B cell (primary cell): ENCODE measurements at regions of chr1 and their contacts with region 1.

Region 1: DNA sequence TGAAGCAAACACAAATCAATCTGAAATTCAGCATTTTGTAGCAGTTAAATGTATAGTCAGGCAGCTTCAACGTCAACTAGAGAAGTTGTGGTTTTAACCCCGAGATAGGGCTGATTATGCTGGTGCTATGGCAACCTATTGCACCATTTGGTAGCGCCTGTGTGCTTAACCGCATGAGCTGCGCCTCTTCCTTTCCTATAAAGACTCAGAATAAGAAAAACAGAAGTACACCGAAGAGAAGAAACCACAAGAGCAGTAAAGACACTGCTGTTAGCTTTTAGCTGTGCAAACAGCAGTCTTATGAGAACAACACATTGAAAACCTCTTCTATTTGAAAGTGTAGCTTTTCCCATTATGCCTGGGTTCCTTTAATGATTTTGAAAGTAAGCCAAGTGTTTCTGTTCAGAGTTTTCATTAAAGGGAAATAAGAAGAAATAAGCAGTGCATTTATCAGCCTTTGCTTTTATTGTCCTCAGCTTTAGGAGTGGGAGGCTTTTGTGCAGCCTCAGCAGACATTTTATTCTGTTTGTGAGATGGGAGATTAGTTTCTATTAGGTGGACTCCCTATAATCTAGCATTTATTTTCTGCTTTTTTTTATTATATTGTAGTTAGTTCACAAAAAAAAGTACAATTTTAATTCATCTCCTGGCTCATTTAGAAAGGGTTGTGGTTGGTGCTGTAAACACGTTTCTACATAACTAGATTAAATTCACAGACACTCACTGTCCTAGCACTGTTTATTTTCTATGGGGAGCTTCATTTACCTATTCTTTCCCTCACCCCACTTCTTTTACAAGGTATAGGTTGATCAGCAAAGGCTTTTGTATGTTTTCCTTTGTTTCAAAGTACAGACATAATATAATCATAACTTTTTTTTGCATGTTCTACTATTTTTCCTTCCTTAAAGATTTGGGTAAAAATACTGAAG is 43.3 kb downstream of the PTPRC start:
- DNase-seq: peak; percentile 94
- ATAC-seq: peak; percentile 83
- H3K4me3 ChIP-seq: peak overlapping the region; percentile 9 to 66 (median 35)
- H3K4me3 Mint-ChIP-seq: peak overlapping the region; percentile 57
- H3K27ac ChIP-seq: peak overlapping the region; percentile 73 to 98
- H3K27ac Mint-ChIP-seq: peak overlapping the region; percentile 82
- H3K4me1 ChIP-seq: peaks cover 76 to 92% of the 10 kb centered on the region in 2 donors
- H3K4me1 Mint-ChIP-seq: peaks cover 86% of the 10 kb centered on the region
- H3K27me3 ChIP-seq: no peaks in the 10 kb centered on the region
- H3K27me3 Mint-ChIP-seq: no peaks in the 10 kb centered on the region
- CTCF ChIP-seq: no peak

Region 2: DNA sequence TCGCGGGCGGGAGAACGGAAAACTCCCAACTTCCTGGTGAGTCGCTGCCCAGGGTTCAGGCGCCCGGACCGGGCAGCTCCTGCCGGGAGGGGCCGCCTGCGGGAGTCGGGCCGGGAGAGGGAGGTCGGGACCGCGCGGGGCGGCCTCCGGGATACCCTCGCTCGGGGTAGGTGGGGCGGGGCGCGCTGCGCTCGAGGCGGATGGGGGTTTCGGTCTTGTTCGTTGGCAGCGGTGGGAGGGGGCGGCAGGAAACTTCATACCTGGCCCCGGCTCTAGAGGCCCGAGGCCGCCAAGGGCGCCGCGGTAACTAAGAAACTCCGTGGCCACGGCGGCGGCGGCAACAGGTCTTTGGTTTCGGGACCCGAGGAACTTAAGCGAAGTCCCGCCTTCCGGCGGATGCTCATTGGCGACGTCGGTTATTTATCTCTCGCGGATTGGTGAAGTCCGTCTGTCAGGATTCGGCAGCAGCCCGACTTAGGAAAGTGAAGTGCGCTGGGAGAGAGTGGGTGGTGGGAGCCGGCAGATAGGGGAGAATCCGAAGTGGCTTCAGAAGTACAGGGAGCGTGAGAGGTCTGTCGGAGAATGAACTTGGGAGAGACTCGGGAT is 524.8 kb before region 1 on chr1:
- CTCF ChIA-PET with region 1: interaction called, 5 read pairs
- POLR2A ChIA-PET with region 1: no interaction called
- intact Hi-C with region 1: loop called (anchors 2 kb)
- DNase-seq: peak; percentile 90
- ATAC-seq: peak; percentile 51
- H3K4me3 ChIP-seq: peak overlapping the region; percentile 64 to 97 (median 87)
- H3K4me3 Mint-ChIP-seq: peak overlapping the region; percentile 99
- H3K27ac ChIP-seq: peak overlapping the region; percentile 88 to 95
- H3K27ac Mint-ChIP-seq: peak overlapping the region; percentile 97
- H3K4me1 ChIP-seq: peaks cover 24 to 36% of the 10 kb centered on the region in 2 donors
- H3K4me1 Mint-ChIP-seq: peaks cover 41% of the 10 kb centered on the region
- H3K27me3 ChIP-seq: no peaks in the 10 kb centered on the region
- H3K27me3 Mint-ChIP-seq: no peaks in the 10 kb centered on the region
- CTCF ChIP-seq: no peak

Region 3: GRCh38 chr1:198416296-198416695 is 265.8 kb before region 1 on chr1:
- CTCF ChIA-PET with region 1: no interaction called
- POLR2A ChIA-PET with region 1: no interaction called
- intact Hi-C with region 1: no loop called
- DNase-seq: no peak
- ATAC-seq: no peak
- H3K4me3 ChIP-seq: no peak overlapping the region
- H3K4me3 Mint-ChIP-seq: no peak overlapping the region
- H3K27ac ChIP-seq: no peak overlapping the region
- H3K27ac Mint-ChIP-seq: no peak overlapping the region
- H3K4me1 ChIP-seq: no peaks in the 10 kb centered on the region
- H3K4me1 Mint-ChIP-seq: no peaks in the 10 kb centered on the region
- H3K27me3 ChIP-seq: peaks cover 0 to 5% (median 1%) of the 10 kb centered on the region in 4 experiments
- H3K27me3 Mint-ChIP-seq: peaks cover 17% of the 10 kb centered on the region
- CTCF ChIP-seq: no peak

Region 4: GRCh38 chr1:198520524-198521254 is 161.4 kb before region 1 on chr1:
- CTCF ChIA-PET with region 1: interaction called, 16 read pairs
- POLR2A ChIA-PET with region 1: interaction called, 5 read pairs
- intact Hi-C with region 1: loop called (anchors 1 kb)
- DNase-seq: peak; percentile 43
- ATAC-seq: peak; percentile 64
- H3K4me3 ChIP-seq: peak overlapping the region in 1 of 5 experiments; percentile 45
- H3K4me3 Mint-ChIP-seq: peak overlapping the region; percentile 67
- H3K27ac ChIP-seq: peak overlapping the region; percentile 35 to 59
- H3K27ac Mint-ChIP-seq: peak overlapping the region; percentile 37
- H3K4me1 ChIP-seq: peaks cover 20 to 34% of the 10 kb centered on the region in 2 donors
- H3K4me1 Mint-ChIP-seq: peaks cover 57% of the 10 kb centered on the region
- H3K27me3 ChIP-seq: no peaks in the 10 kb centered on the region
- H3K27me3 Mint-ChIP-seq: no peaks in the 10 kb centered on the region
- CTCF ChIP-seq: no peak

Region 5: DNA sequence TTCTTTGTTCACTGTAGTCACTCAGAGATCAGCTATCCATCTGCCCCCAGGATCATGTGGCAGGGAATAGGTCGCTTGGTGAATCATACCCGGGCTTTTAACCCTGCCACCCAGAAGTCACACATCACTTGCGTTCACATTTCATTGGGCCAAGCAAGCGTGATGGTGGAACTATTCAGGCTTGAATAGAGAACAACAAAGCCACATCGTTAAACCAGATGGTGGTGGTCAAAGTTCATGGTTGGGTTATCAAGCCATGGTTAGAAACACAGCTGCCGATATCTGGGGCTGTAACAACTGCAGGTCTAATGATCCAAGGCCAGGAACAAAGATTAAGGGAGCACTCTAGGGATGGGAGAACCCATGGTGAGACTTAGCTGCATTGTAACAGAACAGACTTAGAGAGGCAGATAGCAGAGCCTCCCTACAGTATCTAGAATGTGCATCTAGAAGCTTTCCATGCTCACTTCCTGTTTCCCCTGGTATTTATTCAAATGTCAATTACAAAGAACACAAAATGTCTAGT is 83.2 kb before region 1 on chr1:
- CTCF ChIA-PET with region 1: interaction called, 13 read pairs
- POLR2A ChIA-PET with region 1: interaction called, 11 read pairs
- intact Hi-C with region 1: loop called (anchors 1 kb)
- DNase-seq: peak; percentile 90
- ATAC-seq: peak; percentile 81
- H3K4me3 ChIP-seq: peak overlapping the region; percentile 44 to 70 (median 64)
- H3K4me3 Mint-ChIP-seq: peak overlapping the region; percentile 97
- H3K27ac ChIP-seq: peak overlapping the region; percentile 94 to 96
- H3K27ac Mint-ChIP-seq: peak overlapping the region; percentile 99
- H3K4me1 ChIP-seq: peaks cover 75 to 80% of the 10 kb centered on the region in 2 donors
- H3K4me1 Mint-ChIP-seq: peaks cover 81% of the 10 kb centered on the region
- H3K27me3 ChIP-seq: no peaks in the 10 kb centered on the region
- H3K27me3 Mint-ChIP-seq: no peaks in the 10 kb centered on the region
- CTCF ChIP-seq: no peak

Region 6: GRCh38 chr1:198638894-198639635 is 43.0 kb before region 1 on chr1 and contains the start of gene PTPRC:
- CTCF ChIA-PET with region 1: interaction called, 14 read pairs
- POLR2A ChIA-PET with region 1: interaction called, 9 read pairs
- intact Hi-C with region 1: loop called (anchors 1 kb)
- DNase-seq: peak; percentile 87
- ATAC-seq: peak; percentile 81
- H3K4me3 ChIP-seq: peak within 1 kb of the TSS; percentile 60 to 98 (median 87)
- H3K4me3 Mint-ChIP-seq: peak within 1 kb of the TSS; percentile 89
- H3K27ac ChIP-seq: peak within 1 kb of the TSS; percentile 82 to 94
- H3K27ac Mint-ChIP-seq: peak within 1 kb of the TSS; percentile 94
- H3K4me1 ChIP-seq: peaks cover 49 to 63% of the 10 kb centered on the region in 2 donors
- H3K4me1 Mint-ChIP-seq: peaks cover 65% of the 10 kb centered on the region
- H3K27me3 ChIP-seq: no peaks in the 10 kb centered on the region
- H3K27me3 Mint-ChIP-seq: no peaks in the 10 kb centered on the region
- CTCF ChIP-seq: no peak
- total RNA-seq, gene PTPRC: 543 and 545 TPM in 2 replicates

Region 7: DNA sequence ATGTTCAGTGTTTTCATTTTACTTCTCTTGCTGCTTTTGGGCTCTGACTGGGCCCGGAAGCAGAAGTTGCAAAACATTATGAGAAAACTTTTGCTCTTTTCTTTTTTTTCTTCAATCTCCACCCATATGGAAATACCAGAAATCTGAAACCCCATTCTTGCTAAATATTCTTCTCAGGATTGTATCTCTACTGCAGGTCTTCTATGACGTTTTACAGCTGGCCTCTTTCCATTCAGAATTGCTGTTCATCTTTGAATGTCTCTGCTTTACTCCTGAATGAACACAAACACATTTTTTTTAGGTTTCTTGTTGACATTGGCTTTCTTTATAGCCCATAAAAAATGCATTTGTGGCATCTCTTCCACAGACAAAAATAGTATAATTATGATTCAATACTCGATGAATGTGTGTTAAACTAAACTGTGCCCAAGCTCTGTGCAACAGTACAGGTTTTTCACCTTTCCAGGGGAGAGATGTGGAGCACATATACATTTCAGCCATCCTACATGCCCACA is 24.5 kb before region 1 on chr1:
- CTCF ChIA-PET with region 1: interaction called, 10 read pairs
- POLR2A ChIA-PET with region 1: interaction called, 8 read pairs
- intact Hi-C with region 1: no loop called
- DNase-seq: peak; percentile 63
- ATAC-seq: peak; percentile 58
- H3K4me3 ChIP-seq: peak overlapping the region in 4 of 5 experiments; percentile 12 to 25 (median 13)
- H3K4me3 Mint-ChIP-seq: peak overlapping the region; percentile 50
- H3K27ac ChIP-seq: peak overlapping the region; percentile 47 to 90
- H3K27ac Mint-ChIP-seq: peak overlapping the region; percentile 66
- H3K4me1 ChIP-seq: peaks cover 50 to 84% of the 10 kb centered on the region in 2 donors
- H3K4me1 Mint-ChIP-seq: peaks cover 63% of the 10 kb centered on the region
- H3K27me3 ChIP-seq: no peaks in the 10 kb centered on the region
- H3K27me3 Mint-ChIP-seq: no peaks in the 10 kb centered on the region
- CTCF ChIP-seq: no peak

Region 8: GRCh38 chr1:198696211-198696610 is 14.1 kb after region 1 on chr1:
- CTCF ChIA-PET with region 1: interaction called, 11 read pairs
- POLR2A ChIA-PET with region 1: no interaction called
- intact Hi-C with region 1: loop called (anchors 1 kb)
- DNase-seq: peak; percentile 62
- ATAC-seq: peak; percentile 69
- H3K4me3 ChIP-seq: peak overlapping the region in 1 of 5 experiments; percentile 19
- H3K4me3 Mint-ChIP-seq: peak overlapping the region; percentile 47
- H3K27ac ChIP-seq: peak overlapping the region in 1 of 2 donors; percentile 50
- H3K27ac Mint-ChIP-seq: peak overlapping the region; percentile 42
- H3K4me1 ChIP-seq: peaks cover 21 to 40% of the 10 kb centered on the region in 2 donors
- H3K4me1 Mint-ChIP-seq: peaks cover 66% of the 10 kb centered on the region
- H3K27me3 ChIP-seq: no peaks in the 10 kb centered on the region
- H3K27me3 Mint-ChIP-seq: no peaks in the 10 kb centered on the region
- CTCF ChIP-seq: no peak